ENCODE measurements at regions of chr7 and their contacts with region 1.

Region 1: DNA sequence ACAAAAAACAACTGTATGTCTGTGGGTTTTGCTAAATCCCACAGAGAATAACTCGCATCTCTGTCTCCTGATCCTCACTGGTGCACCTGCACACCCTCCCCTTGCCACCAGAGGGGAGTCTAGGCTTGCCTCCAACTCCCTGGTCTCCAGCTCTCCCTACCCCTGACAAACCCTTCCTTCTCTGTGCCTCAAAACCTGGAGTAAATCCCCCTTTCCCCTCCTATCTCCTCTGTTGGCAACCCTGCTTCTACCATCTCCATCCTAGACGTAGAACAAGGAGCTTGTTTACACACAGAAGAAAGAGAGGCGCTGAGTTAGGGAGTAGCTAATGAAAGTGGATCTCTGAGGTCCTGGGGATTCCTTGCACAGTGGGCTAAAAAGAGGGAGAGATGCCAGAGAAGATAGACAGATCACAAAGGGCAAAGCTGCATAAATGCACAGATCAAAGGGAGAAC is 6.0 kb downstream of the MBLAC1 start:
- DNase-seq: no peak
- H3K4me3 ChIP-seq: no peak overlapping the region
- CTCF ChIP-seq: peak; percentile 93

Region 2: DNA sequence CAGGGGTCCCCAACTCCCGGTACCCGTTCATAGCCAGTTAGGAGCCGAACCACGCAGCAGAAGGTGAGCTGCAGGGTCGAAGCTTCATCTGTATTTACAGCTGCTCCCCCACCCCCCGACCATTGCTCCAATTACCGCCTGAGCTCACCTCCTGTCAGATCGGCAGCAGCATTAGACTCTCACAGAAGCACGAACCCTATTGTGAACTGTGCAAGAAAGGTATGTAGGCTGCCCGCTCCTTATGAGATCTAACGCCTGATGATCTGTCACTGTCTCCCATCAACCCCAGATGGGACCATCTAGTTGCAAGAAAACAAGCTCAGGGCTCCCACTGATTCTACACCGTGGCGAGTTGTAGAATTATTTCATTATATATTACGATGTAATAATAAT is 142.3 kb before region 1 on chr7:
- CTCF ChIA-PET with region 1: interaction called, 72 read pairs
- POLR2A ChIA-PET with region 1: interaction called, 3 read pairs
- DNase-seq: no peak
- H3K4me3 ChIP-seq: peak overlapping the region; percentile 38
- CTCF ChIP-seq: no peak

Region 3: DNA sequence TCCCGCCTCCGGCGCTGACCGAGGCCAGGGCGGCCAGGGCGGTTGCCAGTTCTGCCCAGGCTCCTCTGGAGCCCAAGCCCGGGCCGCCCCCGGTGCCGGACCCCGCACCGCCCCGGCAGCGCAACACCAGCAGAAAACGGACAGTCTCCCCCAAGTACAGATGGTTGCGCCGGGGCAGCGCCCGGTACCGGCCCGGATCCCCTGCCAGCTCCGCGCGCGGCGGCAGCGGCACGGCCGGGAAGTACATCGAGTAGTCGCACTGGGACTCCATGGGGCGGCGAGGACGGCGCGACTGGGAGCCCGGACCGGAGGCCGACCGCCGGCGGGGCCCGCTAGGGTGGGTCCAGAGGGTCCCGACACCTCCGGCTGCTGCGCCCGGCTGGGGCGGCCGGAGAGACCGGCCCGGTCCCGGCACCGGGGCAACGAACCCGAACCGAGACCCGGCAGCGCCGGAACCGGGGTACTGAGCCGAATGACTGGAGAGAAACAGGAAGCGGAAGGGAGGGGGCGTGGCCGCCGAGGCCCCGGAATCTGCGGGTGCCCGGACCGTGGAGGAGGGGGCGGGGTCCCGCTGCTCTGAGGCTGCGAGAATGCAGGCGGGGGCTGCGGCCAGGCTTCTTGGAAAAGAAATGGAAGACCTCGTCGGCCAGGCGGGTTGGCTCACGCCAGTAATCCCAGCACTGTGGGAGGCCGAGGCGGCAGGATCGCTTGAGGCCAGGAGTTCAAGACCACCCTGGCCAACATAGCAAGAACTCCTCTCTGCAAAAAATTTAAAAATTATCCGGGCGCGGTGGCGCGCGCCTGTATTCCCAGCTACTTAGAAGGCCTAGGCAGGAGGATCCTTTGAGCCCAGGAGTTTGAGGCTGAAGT is 25.7 kb after region 1 on chr7 and contains the start of gene TRAPPC14:
- CTCF ChIA-PET with region 1: interaction called, 31 read pairs
- POLR2A ChIA-PET with region 1: no interaction called
- DNase-seq: no peak
- H3K4me3 ChIP-seq: peak within 1 kb of the TSS; percentile 71
- CTCF ChIP-seq: no peak

Region 4: DNA sequence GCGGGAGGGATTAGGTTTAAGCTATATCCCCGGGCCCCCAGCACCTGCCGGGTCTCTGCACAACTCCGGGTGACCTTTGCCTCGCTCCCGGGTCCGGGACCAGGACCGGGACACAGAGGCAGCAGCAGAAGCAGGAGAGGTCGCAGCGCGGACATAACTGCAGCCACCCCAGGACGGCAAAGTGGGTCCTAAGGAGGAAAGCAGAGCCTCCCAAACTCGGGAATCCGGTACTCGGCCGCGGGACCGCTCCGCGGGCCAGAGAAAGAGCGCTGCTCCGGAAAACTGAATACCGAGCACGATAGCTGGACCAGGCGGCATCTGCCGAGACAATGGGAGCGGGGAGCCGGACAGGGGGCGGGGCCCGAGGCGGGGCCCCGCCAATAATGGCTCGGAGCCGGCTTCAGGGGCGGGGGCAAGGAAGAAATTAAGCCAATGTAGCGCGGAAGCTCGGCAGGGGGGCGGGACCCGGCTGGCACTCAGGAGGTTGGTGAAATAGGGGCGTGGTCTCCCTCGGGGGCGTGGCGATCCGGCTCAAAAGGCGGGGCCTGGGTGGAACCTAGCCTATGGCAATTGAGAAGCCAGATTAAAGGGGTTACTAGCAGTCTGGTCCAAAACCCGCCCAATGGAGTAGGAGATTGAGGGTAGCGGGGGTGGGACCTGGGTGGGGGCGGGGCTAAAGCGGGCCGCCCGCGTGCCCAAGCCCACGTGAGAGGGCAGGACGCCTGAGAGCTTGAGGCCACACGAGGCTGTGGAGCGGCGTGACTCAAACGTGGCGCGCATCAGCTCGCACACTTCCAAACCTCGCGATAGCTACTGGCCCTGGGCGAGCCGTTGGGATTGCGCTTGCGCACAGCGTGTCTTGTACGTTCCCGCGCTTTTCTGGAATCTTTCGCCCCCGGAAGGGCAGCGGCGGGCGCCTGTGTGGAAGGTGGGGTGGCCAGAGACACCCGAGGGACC is 44.6 kb after region 1 on chr7 and contains the starts of genes GPC2 and STAG3:
- CTCF ChIA-PET with region 1: interaction called, 13 read pairs
- POLR2A ChIA-PET with region 1: no interaction called
- DNase-seq: peak; percentile 70
- H3K4me3 ChIP-seq: peak within 1 kb of the TSS; percentile 89
- CTCF ChIP-seq: no peak

Region 5: DNA sequence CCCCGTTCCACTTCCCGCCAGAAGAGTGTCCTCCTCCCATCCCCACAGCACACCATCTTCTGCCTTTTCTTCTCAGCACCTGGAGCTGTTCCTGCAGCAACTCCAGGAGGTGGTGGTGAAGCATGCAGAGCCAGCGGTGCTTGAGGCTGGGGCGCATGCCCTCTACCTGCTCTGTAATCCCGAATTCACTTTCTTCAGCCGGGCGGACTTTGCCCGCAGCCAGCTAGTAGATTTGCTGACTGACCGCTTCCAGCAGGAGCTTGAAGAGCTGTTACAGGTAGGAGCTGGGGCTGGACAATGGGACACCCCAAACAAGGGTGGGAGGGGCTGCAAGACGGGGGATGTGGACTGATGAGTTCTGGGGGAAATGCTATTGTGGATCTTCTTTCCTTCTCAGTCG is 68.0 kb after region 1 on chr7:
- CTCF ChIA-PET with region 1: interaction called, 298 read pairs
- POLR2A ChIA-PET with region 1: no interaction called
- DNase-seq: no peak
- H3K4me3 ChIP-seq: no peak overlapping the region
- CTCF ChIP-seq: no peak

Measured in AG04449 (cell line).